Activated T-helper 2 cell treated with anti-CD3 and anti-CD28 coated beads, Interferon-gamma antibody, Interleukin-2, Interleukin-4, amounts not matched to agents 10 μg/mL and 5 μg/mL and 100 μg/mL, durations not matched to agents 14 hours and 24 hours and 36 hours (primary cell): ENCODE measurements at regions of chrX and their contacts with region 1.

Region 1: GRCh38 chrX:134460005-134460861 is at the start of gene HPRT1:
- DNase-seq: peak; percentile 74
- H3K4me3 Mint-ChIP-seq: peak within 1 kb of the TSS; percentile 88
- H3K27ac Mint-ChIP-seq: peak within 1 kb of the TSS; percentile 88
- H3K4me1 Mint-ChIP-seq: peaks cover 14% of the 10 kb centered on the region
- H3K27me3 Mint-ChIP-seq: no peaks in the 10 kb centered on the region
- total RNA-seq, gene HPRT1: 118 and 129 TPM in 2 replicates

Region 2: GRCh38 chrX:134377537-134377936 is 82.7 kb before region 1 on chrX:
- intact Hi-C with region 1: loop called (anchors 2 kb)
- DNase-seq: no peak
- H3K4me3 Mint-ChIP-seq: no peak overlapping the region
- H3K27ac Mint-ChIP-seq: no peak overlapping the region
- H3K4me1 Mint-ChIP-seq: peaks cover 10% of the 10 kb centered on the region
- H3K27me3 Mint-ChIP-seq: no peaks in the 10 kb centered on the region

Region 3: DNA sequence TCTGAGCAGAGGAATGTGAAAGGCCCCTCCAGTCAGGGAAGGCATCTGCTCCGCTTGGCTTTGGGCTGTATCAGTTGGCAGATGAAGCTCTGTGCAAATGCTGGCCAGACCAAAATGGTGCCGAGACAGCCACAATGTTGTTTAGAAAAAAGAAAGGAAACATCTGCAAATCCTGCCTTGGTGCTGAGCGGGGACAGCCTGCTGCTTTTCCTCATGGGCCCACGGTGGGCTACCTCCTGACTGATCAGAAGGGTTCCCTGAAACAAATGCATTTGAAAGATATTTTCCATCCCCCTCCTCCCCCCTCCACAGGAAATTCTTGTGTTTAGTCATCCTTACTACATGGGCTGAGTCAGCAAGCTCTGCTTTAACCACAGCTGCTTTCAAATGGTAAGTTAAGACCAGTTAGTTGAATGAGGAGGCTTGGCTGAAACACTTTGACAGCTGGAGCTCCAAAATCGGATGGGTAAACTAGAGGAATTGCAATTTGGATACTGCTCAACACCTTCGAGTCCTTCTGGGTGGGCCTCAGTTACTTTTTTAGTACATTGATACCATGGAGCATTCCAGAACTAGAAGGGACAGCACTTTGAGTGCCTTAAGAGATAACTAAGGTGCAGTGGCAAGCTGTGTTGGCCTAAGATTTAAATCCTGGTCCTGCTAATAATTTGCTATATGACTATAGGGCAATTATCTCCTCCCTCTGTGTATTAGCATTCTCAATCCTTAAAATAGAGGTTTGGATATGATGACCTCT is 162.0 kb after region 1 on chrX:
- intact Hi-C with region 1: no loop called
- DNase-seq: no peak
- H3K4me3 Mint-ChIP-seq: no peak overlapping the region
- H3K27ac Mint-ChIP-seq: no peak overlapping the region
- H3K4me1 Mint-ChIP-seq: peaks cover 23% of the 10 kb centered on the region
- H3K27me3 Mint-ChIP-seq: peaks cover 2% of the 10 kb centered on the region